ENCODE measurements at regions of chr16 and their contacts with region 1.

Region 1: GRCh38 chr16:2267913-2268666 is at the start of gene RNPS1:
- DNase-seq: peak; percentile 77 to 98
- H3K4me3 ChIP-seq: peak within 1 kb of the TSS; percentile 63 to 92
- H3K27ac ChIP-seq: peak within 1 kb of the TSS; percentile 95 to 98
- H3K4me1 ChIP-seq: peaks cover 10 to 21% of the 10 kb centered on the region in 2 donors
- H3K27me3 ChIP-seq: no peaks in the 10 kb centered on the region
- CTCF ChIP-seq: no peak
- total RNA-seq, gene RNPS1: 134 TPM

Region 2: GRCh38 chr16:2178321-2179106 is 89.6 kb before region 1 on chr16:
- intact Hi-C with region 1: no loop called
- DNase-seq: no peak
- H3K4me3 ChIP-seq: no peak overlapping the region
- H3K27ac ChIP-seq: no peak overlapping the region
- H3K4me1 ChIP-seq: no peaks in the 10 kb centered on the region
- H3K27me3 ChIP-seq: no peaks in the 10 kb centered on the region
- CTCF ChIP-seq: no peak

Region 3: GRCh38 chr16:2205104-2205966 is 62.8 kb before region 1 on chr16 and contains the start of gene MLST8:
- intact Hi-C with region 1: loop called (anchors 5 kb)
- DNase-seq: peak; percentile 25 to 90
- H3K4me3 ChIP-seq: peak within 1 kb of the TSS; percentile 80 to 97
- H3K27ac ChIP-seq: peak within 1 kb of the TSS; percentile 96 to 98
- H3K4me1 ChIP-seq: peaks cover 4 to 11% of the 10 kb centered on the region in 2 donors
- H3K27me3 ChIP-seq: no peaks in the 10 kb centered on the region
- CTCF ChIP-seq: peak in 2 of 3 experiments; percentile 6 to 10
- total RNA-seq, gene MLST8: 23.7 TPM

Region 4: DNA sequence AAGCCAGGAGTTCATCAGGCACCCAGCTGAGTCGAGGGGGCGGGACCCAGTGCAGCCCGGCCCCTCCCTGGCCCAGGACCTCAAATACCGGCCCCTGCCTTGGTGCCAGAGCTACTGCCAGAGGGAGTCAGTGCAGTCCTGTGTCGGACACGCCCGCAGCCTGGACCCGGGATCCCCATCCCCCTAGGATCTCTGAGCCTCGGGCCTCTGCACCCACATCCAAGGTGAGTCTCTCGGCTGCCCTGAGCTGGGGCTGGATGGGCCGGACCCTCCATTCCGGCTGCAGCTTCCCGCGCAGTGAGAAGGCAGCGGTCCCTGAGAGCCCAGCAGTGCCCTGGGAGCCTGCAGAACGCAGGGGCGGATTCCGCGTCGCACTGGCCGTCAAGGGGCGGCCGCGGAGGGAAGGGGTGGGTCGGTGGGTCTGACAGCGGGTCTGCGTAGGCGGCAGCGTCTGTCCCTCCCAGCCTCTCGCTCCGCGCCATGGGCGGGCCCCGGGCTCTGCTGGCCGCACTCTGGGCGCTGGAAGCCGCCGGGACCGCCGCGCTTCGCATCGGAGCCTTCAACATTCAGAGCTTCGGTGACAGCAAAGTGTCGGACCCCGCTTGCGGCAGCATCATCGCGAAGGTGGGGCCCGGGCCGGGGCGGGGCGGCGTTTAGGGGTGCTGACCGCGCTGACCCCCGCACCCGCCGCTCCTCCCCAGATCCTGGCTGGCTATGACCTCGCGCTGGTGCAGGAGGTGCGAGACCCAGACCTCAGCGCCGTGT is 31.6 kb before region 1 on chr16 and contains the start of gene DNASE1L2:
- intact Hi-C with region 1: no loop called
- DNase-seq: no peak
- H3K4me3 ChIP-seq: peak within 1 kb of the TSS in 1 of 2 donors; percentile 51
- H3K27ac ChIP-seq: no peak within 1 kb of the TSS
- H3K4me1 ChIP-seq: peaks cover 8 to 10% of the 10 kb centered on the region in 2 donors
- H3K27me3 ChIP-seq: peaks cover 6% of the 10 kb centered on the region
- CTCF ChIP-seq: no peak
- total RNA-seq, gene DNASE1L2: not detected

Region 5: DNA sequence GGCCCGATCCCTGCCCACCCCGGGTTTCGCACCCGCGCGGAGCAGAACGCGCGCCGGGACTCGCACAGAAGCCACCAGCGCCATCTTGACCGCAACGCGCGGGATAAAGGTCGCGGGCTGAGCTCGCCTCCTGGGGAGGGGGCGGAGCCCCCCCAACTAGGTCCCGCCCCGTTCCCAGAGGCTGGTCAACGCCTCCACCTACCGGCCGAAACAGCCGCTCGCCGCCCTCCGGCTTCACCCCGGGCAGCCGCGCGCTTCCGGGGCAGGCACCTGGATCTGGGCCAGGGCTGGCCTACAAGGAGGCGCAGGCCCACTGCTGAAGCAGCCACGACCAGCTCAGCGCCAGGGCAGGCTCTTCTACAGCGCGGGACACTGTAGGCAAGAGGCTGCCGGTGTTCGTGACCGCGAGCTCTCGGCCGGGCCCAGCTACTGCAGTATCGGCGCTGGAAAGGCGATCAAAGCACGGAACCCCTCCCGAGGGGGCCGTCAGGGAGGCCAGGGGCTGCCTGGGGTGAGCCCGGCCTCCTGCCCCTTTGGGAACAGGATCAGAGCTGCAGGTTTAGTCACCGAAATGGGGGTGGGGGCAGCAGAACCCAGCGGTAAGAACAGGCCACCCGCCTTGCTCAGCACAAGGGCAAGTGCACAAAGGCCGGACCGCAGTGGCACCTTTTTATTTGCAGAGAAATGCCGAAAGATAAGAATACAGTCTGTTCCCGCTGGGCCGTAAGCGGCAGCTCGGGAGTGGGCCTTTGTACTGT is 16.4 kb before region 1 on chr16 and contains the start of gene ECI1:
- intact Hi-C with region 1: loop called (anchors 1 kb)
- DNase-seq: peak; percentile 74 to 98
- H3K4me3 ChIP-seq: peak within 1 kb of the TSS; percentile 80 to 86
- H3K27ac ChIP-seq: peak within 1 kb of the TSS; percentile 82 to 88
- H3K4me1 ChIP-seq: peaks cover 10 to 11% of the 10 kb centered on the region in 2 donors
- H3K27me3 ChIP-seq: no peaks in the 10 kb centered on the region
- CTCF ChIP-seq: peak; percentile 73 to 76 (median 74)
- total RNA-seq, gene ECI1: 10.9 TPM

Region 6: GRCh38 chr16:2299121-2299914 is 31.2 kb after region 1 on chr16:
- intact Hi-C with region 1: no loop called
- DNase-seq: no peak
- H3K4me3 ChIP-seq: no peak overlapping the region
- H3K27ac ChIP-seq: no peak overlapping the region
- H3K4me1 ChIP-seq: no peaks in the 10 kb centered on the region
- H3K27me3 ChIP-seq: no peaks in the 10 kb centered on the region
- CTCF ChIP-seq: no peak

Region 7: GRCh38 chr16:2447920-2448583 is 180.0 kb after region 1 on chr16:
- intact Hi-C with region 1: no loop called
- DNase-seq: no peak
- H3K4me3 ChIP-seq: no peak overlapping the region
- H3K27ac ChIP-seq: no peak overlapping the region
- H3K4me1 ChIP-seq: no peaks in the 10 kb centered on the region
- H3K27me3 ChIP-seq: no peaks in the 10 kb centered on the region
- CTCF ChIP-seq: no peak